IMR-90 (cell line): ENCODE measurements at regions of chr16 and their contacts with region 1.

Region 1: DNA sequence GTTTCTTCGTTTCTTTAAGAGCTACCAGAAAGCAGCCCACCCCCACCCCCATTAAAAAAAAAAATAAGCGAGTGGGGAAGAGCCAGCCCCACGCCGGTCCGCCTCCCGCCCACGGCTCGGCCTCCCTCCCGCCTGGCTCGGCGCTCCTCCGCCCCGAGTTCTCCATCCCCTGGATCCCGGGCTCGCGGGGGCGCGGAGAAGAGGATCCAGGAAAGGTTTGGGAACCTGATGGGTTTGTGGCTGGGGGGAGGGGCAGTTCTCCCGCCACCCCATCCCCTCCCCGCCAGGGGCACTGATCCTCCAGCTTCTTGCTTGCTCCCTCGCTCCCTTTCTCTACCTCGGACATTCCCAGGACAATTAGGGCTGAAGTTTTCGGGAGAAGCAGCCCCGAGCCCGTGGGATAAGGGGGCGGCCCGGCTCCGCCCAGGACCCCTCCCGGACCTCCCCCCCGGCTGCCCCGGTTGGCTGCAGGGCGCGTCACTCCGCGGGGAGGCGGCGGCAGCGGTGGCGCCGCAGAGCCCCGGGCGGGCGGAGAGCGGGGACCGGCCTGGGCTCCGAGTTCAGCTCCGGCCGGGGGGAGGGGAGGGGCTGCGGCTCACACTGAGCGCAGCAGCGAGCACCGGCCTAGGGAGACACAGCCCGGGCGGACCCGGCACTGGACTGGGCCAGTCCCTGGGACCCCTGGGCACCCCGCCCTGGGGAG is 1.0 kb upstream of the SALL1 start:
- DNase-seq: peak; percentile 80
- ATAC-seq: peak; percentile 86
- H3K4me3 ChIP-seq: peak overlapping the region; percentile 89
- H3K27ac ChIP-seq: peak overlapping the region; percentile 94
- H3K4me1 ChIP-seq: peaks cover 7% of the 10 kb centered on the region
- H3K27me3 ChIP-seq: peaks cover 3% of the 10 kb centered on the region; the same call in 1 of the 2 replicates
- CTCF ChIP-seq: no peak
- POLR2A ChIP-seq: no peak; the same call in 1 of the 2 replicates
- RAD21 ChIP-seq: no peak

Region 2: DNA sequence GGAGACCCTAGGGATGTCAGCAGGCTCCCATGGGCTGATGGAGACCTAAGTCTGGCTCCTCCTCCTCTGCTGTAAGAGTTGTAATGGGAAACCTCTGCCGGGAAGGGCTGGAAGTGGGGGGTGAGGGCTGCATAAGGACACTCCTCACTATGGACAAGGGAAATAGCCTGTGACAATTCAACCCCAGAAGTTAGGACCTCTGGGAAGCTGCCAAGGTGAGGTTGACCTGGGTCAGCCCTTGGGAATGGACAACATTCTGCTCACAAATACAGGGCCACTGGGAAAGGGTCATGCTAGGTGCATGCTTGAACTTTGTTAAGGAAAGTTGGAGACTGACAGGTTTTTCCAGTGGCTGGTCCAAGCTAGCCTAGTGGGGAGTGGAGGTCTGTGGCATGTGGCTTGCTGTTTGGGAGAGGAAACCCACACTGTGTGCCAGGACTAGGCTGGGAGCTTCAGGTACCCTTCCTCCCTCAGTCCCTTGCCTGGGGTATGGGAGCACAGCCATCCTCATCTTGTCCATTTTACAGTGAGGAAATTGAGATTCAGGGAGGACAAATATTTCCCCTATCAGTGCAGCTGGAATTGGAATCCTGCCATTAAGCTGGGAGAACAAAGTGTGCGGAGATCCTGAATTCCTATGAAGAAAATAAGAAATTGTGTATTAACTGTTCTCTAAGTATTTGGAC is 191.5 kb before region 1 on chr16:
- CTCF ChIA-PET with region 1: no interaction called
- POLR2A ChIA-PET with region 1: no interaction called
- dilution Hi-C with region 1: no loop called
- in situ Hi-C with region 1: no loop called
- intact Hi-C with region 1: no loop called
- DNase-seq: no peak
- ATAC-seq: no peak
- H3K4me3 ChIP-seq: no peak overlapping the region
- H3K27ac ChIP-seq: no peak overlapping the region
- H3K4me1 ChIP-seq: no peaks in the 10 kb centered on the region
- H3K27me3 ChIP-seq: no peaks in the 10 kb centered on the region
- CTCF ChIP-seq: no peak
- POLR2A ChIP-seq: no peak
- RAD21 ChIP-seq: no peak

Region 3: GRCh38 chr16:51210087-51210486 is 58.0 kb after region 1 on chr16:
- CTCF ChIA-PET with region 1: no interaction called
- POLR2A ChIA-PET with region 1: interaction called, 10 read pairs
- dilution Hi-C with region 1: no loop called
- in situ Hi-C with region 1: no loop called
- intact Hi-C with region 1: no loop called
- DNase-seq: no peak
- ATAC-seq: no peak
- H3K4me3 ChIP-seq: no peak overlapping the region
- H3K27ac ChIP-seq: no peak overlapping the region
- H3K4me1 ChIP-seq: no peaks in the 10 kb centered on the region
- H3K27me3 ChIP-seq: no peaks in the 10 kb centered on the region
- CTCF ChIP-seq: no peak
- POLR2A ChIP-seq: no peak
- RAD21 ChIP-seq: no peak

Region 4: DNA sequence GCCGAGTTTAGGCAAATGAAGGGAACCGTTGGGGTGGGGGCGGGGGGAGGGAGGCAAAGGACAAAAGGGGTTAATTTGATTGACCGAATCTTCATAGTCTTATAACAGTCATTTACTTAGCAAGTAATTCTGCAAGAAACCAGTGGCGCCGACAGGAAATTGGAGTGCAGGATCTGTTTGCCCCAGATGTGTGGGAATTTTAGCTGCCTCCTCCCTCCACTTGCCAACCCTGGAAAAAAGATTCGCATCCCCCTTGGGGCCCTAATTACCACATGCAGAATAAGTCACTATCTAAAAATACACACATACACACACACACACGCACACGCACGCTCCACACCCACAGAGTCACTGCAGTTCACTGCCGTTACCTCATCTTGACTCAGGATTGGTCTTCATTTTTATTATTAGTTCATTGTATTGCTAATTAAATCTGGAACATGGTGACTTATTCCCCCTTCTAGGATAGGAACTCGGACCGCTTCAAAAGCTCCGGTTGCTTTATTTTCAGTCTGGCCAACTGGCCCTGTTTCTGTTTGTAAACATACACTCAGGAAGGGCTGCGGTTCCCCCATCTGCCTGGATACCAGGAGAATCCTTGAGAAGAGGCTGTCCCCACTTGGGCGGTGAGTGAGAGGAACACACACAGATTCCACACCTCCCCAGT is 240.5 kb after region 1 on chr16:
- CTCF ChIA-PET with region 1: no interaction called
- POLR2A ChIA-PET with region 1: no interaction called
- dilution Hi-C with region 1: no loop called
- in situ Hi-C with region 1: no loop called
- intact Hi-C with region 1: loop called (anchors 10 kb)
- DNase-seq: peak; percentile 85
- ATAC-seq: peak; percentile 73
- H3K4me3 ChIP-seq: no peak overlapping the region
- H3K27ac ChIP-seq: no peak overlapping the region
- H3K4me1 ChIP-seq: peaks cover 7% of the 10 kb centered on the region; the same call in 1 of the 2 replicates
- H3K27me3 ChIP-seq: no peaks in the 10 kb centered on the region
- CTCF ChIP-seq: no peak
- POLR2A ChIP-seq: no peak
- RAD21 ChIP-seq: no peak; the same call in 1 of the 2 replicates

Region 5: GRCh38 chr16:51538707-51539498 is 386.8 kb after region 1 on chr16:
- CTCF ChIA-PET with region 1: no interaction called
- POLR2A ChIA-PET with region 1: interaction called, 3 read pairs
- dilution Hi-C with region 1: no loop called
- in situ Hi-C with region 1: no loop called
- intact Hi-C with region 1: loop called (anchors 5 kb)
- DNase-seq: peak; percentile 92
- ATAC-seq: peak; percentile 97
- H3K4me3 ChIP-seq: no peak overlapping the region
- H3K27ac ChIP-seq: peak overlapping the region; percentile 82
- H3K4me1 ChIP-seq: peaks cover 18% of the 10 kb centered on the region
- H3K27me3 ChIP-seq: no peaks in the 10 kb centered on the region
- CTCF ChIP-seq: no peak
- POLR2A ChIP-seq: no peak
- RAD21 ChIP-seq: no peak; the same call in 1 of the 2 replicates

Region 6: DNA sequence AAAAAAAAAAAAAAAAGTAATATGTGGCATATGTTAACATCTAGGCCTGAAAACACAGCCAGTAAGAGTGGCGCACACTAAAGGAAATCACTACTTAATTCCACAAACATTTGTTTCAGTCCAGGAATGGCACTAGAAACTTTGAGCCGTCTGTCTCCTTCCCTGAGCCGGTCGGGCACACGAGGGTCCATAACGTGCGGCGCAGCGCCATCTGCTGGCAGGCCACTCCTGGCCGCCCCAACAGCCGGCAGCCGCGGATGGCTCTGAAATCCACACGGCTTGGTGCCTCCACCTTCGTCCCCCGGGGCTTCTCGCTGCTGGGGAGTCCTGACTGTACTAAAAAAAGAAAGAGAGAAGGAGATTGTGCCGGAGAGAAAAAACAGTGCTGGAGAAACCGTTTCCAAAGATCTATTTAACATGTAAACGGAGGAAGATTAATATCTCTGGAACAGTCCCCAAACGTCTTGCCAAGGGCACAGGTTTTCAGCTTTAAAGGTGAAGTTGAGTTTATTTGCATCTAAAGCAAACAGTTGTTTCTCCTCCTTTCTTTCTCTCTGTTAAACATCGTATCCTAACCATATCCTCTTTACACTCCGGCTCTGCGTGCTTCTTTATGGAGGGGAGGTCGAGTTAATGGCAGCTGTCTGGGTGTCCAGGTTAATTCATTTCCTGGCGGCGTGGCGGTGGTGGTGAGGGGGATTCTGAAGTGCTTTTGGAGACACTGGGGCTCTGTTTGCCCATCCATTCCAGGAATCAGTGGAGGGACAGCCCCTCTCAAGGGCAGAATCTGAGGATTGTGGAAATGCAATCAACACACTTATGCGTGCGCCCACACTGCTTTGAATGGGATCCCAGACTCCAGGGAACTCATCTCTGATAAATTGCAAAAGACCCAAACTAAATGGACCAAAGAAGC is 610.2 kb after region 1 on chr16:
- CTCF ChIA-PET with region 1: interaction called, 3 read pairs
- POLR2A ChIA-PET with region 1: no interaction called
- dilution Hi-C with region 1: no loop called
- in situ Hi-C with region 1: loop called (anchors 5 kb)
- intact Hi-C with region 1: loop called (anchors 1 kb)
- DNase-seq: peak; percentile 70
- ATAC-seq: peak; percentile 97
- H3K4me3 ChIP-seq: no peak overlapping the region
- H3K27ac ChIP-seq: no peak overlapping the region
- H3K4me1 ChIP-seq: no peaks in the 10 kb centered on the region; the same call in 1 of the 2 replicates
- H3K27me3 ChIP-seq: no peaks in the 10 kb centered on the region
- CTCF ChIP-seq: peak; percentile 90
- POLR2A ChIP-seq: no peak
- RAD21 ChIP-seq: peak; percentile 93